ENCODE measurements at regions of chr15 and their contacts with region 1.

Region 1: GRCh38 chr15:89893696-89894455 is at the start of gene AP3S2:
- DNase-seq: peak; percentile 95

Region 2: DNA sequence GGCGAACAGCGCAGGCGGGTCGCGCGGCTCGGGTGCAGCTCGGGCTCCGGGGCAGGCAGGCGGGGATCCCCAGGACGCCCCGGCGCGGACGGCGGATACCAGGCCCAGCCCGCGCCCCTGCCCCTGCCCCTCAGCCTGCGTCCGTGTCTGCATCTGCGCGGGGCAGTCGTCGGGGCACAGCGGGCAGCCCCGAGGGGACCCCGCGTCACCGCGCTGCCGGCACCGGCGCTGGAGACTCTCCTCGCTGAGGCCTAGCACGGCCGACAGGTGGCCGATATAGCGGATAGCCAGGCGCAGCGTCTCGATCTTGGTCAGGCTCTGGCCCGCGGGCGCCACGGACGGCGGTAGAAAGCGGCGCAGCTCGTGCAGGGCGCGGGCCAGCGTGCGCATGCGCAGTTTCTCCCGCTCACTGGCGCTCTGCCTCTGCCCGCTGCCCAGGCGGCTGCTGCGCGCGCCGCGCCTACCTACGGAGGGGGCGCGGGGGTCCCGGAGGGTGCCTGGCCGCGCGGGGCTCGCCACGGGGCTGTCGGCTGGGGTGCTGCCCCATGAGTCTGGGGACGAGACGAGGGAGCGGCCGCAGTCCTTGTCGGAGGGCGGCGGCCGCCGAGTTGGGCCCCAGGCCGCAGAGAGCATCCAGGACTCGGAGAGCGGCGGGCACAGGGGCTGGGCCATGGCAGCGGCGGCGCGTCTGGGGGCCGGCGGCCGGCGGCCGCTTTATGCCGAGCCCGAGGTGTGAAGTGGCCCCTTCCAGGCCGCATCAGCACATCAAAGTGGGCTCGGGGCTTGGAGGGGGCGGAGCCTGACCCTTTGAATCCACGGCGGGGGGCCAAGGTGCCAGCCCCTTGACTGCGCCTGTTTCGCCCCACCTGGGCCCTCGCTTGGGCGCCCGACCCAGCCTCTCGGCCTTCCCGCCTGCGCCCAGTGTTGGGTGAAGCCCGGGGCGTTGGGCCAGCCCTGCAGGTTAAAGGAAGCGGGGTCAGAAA is 143.0 kb before region 1 on chr15 and contains the start of gene MESP1:
- in situ Hi-C with region 1: loop called (anchors 25 kb)
- DNase-seq: peak; percentile 92

Region 3: DNA sequence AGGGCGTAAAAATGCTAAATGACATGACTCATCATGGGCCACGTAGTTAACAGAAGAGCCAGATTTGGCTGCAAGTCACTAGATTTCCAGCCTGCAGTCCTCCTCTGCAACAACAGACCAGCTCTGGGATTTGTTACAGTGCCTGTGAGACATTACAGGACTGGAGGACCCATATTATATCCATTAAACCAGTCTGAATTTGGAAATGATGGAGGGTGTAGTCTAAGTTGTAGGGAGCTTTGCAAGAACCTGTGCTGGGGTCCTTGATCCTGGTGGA is 469.0 kb after region 1 on chr15:
- in situ Hi-C with region 1: no loop called
- DNase-seq: no peak

Measured in KBM-7 (cell line).